ENCODE measurements at regions of chr18 and their contacts with region 1.

Region 1: GRCh38 chr18:69898241-69898861 is 49.3 kb downstream of the CD226 start:
- DNase-seq: peak; percentile 81
- H3K4me3 Mint-ChIP-seq: peak overlapping the region; percentile 84
- H3K27ac Mint-ChIP-seq: peak overlapping the region; percentile 92
- H3K4me1 Mint-ChIP-seq: peaks cover 60% of the 10 kb centered on the region
- H3K27me3 Mint-ChIP-seq: no peaks in the 10 kb centered on the region

Region 2: GRCh38 chr18:69858897-69859296 is 39.5 kb before region 1 on chr18:
- intact Hi-C with region 1: no loop called
- DNase-seq: no peak
- H3K4me3 Mint-ChIP-seq: no peak overlapping the region
- H3K27ac Mint-ChIP-seq: no peak overlapping the region
- H3K4me1 Mint-ChIP-seq: peaks cover 3% of the 10 kb centered on the region
- H3K27me3 Mint-ChIP-seq: no peaks in the 10 kb centered on the region

Region 3: DNA sequence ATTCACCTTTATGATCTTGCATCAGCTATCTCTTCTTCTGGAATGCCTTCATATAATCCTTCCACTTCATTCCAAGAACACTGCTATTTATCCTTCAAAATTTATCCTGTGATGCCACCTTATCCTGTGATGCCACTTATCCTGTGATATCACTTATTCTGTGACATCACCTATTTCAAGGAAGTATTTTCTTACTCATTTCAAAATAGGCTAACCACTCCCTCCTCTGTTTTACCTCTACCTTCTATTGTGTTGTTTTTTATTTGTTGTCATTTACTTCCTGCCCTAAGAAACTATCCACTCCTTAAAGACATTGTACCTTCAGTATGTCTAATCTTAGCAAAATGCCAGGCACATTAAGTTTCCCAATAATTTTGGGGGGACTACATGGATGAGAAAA is 10.5 kb after region 1 on chr18:
- intact Hi-C with region 1: loop called (anchors 1 kb)
- DNase-seq: no peak
- H3K4me3 Mint-ChIP-seq: peak overlapping the region; percentile 4
- H3K27ac Mint-ChIP-seq: peak overlapping the region; percentile 77
- H3K4me1 Mint-ChIP-seq: peaks cover 40% of the 10 kb centered on the region
- H3K27me3 Mint-ChIP-seq: no peaks in the 10 kb centered on the region

Region 4: GRCh38 chr18:69948919-69949537 is 50.7 kb after region 1 on chr18:
- intact Hi-C with region 1: loop called (anchors 1 kb)
- DNase-seq: peak; percentile 83
- H3K4me3 Mint-ChIP-seq: no peak overlapping the region
- H3K27ac Mint-ChIP-seq: no peak overlapping the region
- H3K4me1 Mint-ChIP-seq: peaks cover 42% of the 10 kb centered on the region
- H3K27me3 Mint-ChIP-seq: no peaks in the 10 kb centered on the region

Region 5: DNA sequence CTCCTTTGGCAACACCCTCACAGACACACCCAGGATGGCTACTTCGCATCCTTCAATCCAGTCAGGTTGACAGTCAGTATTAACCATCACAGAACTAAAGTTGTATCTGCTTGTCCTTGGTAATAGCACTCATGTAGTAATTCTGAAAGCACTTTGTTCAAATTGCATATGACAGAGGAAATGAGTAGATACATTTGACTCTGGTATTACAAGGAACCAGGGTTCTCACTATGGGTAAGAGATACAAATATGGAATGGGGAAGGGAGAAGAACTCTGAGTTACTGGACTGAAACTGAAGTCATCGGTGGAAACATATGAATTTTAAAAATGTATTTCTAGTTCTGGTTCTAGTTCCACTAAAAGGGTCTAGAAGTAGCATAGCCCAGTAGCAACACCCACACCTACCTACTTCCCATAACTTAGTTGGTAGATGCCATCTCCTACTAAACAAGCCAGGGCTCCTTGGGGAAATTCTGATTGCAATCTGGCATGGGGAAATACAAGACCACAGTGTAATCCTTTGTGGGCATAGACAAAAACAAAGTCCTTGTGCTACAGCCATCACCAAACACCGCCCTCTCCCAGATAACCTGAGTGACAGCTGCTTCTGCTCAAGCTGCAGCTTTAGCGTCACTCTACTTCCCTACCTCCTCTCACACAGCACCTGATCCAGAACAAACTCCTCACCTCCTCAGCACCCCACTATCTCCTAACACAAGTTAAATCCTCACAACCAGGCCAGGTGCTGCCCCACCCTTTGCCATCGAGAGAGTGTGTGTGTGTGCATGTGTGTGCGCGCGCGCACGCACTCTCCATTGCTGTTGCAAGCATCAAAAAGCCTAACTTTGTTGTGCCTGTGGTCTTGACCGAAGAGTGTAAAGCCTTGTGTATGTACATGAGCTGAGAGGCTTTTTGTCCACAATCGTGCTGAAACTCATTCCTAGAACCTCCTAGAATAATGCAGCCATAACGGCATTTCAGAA is 80.7 kb after region 1 on chr18:
- intact Hi-C with region 1: loop called (anchors 1 kb)
- DNase-seq: peak; percentile 52
- H3K4me3 Mint-ChIP-seq: no peak overlapping the region
- H3K27ac Mint-ChIP-seq: peak overlapping the region; percentile 51
- H3K4me1 Mint-ChIP-seq: peaks cover 34% of the 10 kb centered on the region
- H3K27me3 Mint-ChIP-seq: no peaks in the 10 kb centered on the region

Measured in activated CD4-positive, alpha-beta T cell treated with anti-CD3 and anti-CD28 coated beads, Interleukin-2, amount 10 ng/mL, durations not matched to agents 24 days and 14 days (primary cell).